Gastrocnemius medialis (tissue), 4 donors: ENCODE measurements at regions of chrX and their contacts with region 1.

Region 1: DNA sequence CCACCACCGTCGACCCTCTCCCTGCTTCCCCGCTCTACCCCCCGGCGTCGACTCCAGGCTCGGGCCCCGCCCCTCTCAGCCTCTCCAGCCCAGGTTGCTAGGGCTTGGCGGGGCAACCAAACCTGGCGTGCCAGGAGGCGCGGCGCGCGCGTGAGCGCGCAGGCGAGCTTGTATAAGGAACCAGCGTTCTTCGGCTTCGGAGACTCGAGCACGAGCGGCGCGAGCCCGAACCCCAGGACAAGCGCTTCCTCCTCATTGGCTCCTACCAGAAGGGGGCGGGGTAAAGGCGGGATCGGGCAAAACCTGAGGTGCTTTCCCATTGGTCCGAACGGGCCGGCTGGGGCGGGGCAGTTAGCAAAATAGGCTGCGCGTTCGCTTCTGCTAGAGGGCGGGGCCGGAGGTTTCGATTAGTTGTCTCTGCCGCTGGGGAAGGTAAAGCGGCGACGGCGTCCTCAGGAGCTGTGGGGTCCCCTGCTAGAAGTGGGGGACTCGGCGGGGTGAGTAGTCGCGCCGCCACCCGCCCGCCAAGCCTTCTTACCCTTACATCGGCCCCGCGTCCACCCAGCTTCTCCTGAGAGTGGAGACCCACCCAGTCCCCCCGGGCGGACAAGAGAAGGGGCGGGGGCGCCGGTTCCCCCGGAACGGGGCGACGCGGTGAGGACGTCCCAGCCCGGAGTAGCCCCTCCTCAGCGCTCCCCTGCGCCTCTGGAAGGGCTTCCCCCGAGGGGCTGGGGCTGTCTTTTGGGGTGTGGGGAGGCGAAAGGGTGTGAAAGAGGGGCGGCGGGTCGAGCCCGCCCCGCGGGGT is at the start of gene CDKL5:
- DNase-seq: peak; percentile 95 to 96
- ATAC-seq: peak; percentile 99
- H3K4me3 ChIP-seq: peak within 1 kb of the TSS; percentile 71 to 93 (median 80)
- H3K27ac ChIP-seq: peak within 1 kb of the TSS; percentile 82 to 86 (median 84)
- H3K4me1 ChIP-seq: peaks cover 0 to 4% of the 10 kb centered on the region in 2 donors
- H3K27me3 ChIP-seq: no peaks in the 10 kb centered on the region
- CTCF ChIP-seq: no peak
- POLR2A ChIP-seq: peak; percentile 72 to 88
- total RNA-seq, gene CDKL5: 1.5 to 3.0 (median 2.8) TPM

Region 2: DNA sequence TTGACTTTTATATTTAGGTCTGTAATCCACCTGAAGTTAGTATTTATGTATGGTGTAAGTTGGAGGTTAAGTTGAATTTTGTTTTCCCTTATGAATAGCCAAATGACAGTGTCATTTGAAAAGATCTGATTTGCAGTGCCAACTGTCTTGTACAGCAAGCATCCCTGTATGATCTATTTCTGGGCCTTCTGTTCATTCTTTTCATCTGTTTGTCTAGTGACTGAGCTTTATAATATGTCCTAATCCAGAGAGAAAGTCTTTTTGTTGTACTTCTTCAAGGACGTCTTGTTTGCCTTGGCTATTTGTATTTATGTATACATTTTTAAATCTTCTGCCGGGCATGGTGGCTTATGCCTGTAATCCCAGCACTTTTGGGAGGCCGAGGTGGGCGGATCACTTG is 39.6 kb after region 1 on chrX:
- in situ Hi-C with region 1: no loop called
- intact Hi-C with region 1: no loop called
- DNase-seq: no peak
- ATAC-seq: no peak
- H3K4me3 ChIP-seq: no peak overlapping the region
- H3K27ac ChIP-seq: no peak overlapping the region
- H3K4me1 ChIP-seq: peaks cover 0 to 6% of the 10 kb centered on the region in 2 donors
- H3K27me3 ChIP-seq: no peaks in the 10 kb centered on the region
- CTCF ChIP-seq: no peak
- POLR2A ChIP-seq: no peak

Region 3: GRCh38 chrX:18674788-18675735 is 249.7 kb after region 1 on chrX:
- in situ Hi-C with region 1: loop called in 1 of 4 experiments (anchors 25 kb)
- intact Hi-C with region 1: loop called (anchors 1 kb)
- DNase-seq: peak; percentile 35 to 58
- ATAC-seq: peak; percentile 89 to 91
- H3K4me3 ChIP-seq: peak overlapping the region; percentile 66 to 79 (median 70)
- H3K27ac ChIP-seq: peak overlapping the region; percentile 82 to 89 (median 85)
- H3K4me1 ChIP-seq: peaks cover 0 to 4% of the 10 kb centered on the region in 2 donors
- H3K27me3 ChIP-seq: no peaks in the 10 kb centered on the region
- CTCF ChIP-seq: no peak
- POLR2A ChIP-seq: peak; percentile 24 to 38